AG04449 (cell line): ENCODE measurements at regions of chr1 and their contacts with region 1.

Region 1: DNA sequence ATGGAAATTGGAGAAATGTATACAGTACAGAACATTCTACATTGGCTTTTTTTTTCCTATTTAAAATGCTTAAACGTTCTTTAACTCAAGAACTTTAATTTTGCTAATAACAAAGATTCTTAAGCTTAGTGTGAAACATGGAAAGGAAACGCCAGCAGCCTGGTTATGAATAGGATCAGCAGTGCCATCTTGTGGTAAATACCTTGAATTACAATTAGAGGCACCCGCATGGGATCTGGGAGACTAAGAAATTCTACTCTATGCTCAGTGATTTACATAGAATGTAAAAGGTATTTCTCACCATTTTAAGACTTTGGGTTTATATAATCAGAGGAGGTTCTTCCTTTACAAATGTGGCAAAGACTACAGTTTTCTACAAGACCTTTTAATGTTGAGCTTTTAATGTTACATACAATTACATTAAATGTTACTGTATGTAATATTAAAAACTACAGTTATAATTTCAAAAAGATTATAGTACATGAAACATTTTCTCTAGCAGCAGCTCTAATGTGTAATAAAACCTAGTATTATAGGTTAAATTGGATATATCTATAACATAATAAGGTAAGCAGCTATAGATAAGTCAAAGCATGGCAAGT is 32.1 kb upstream of the APOBEC4 start:
- DNase-seq: no peak
- H3K4me3 ChIP-seq: no peak overlapping the region
- CTCF ChIP-seq: peak; percentile 38

Region 2: GRCh38 chr1:183370399-183371058 is 314.7 kb before region 1 on chr1:
- CTCF ChIA-PET with region 1: no interaction called
- POLR2A ChIA-PET with region 1: no interaction called
- DNase-seq: no peak
- H3K4me3 ChIP-seq: no peak overlapping the region
- CTCF ChIP-seq: no peak

Region 3: DNA sequence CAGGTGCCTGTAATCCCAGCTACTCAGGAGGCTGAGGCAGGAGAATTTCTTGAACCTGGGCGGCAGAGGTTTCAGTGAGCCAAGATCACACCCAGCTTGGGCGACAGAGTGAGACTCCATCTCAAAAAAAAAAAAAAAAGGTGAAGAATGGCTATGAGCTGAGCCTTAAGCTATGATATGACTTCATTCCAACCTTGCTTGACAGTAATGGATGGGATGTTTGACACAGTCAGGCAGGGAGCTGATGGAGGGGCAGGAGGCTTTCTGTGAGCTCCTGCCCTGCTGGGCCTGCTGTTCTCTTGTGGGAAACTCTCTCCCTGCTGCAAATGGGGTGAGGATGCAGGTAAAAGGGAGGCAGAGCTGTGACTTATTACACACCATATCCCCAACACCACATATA is 122.5 kb before region 1 on chr1:
- CTCF ChIA-PET with region 1: no interaction called
- POLR2A ChIA-PET with region 1: no interaction called
- DNase-seq: no peak
- H3K4me3 ChIP-seq: no peak overlapping the region
- CTCF ChIP-seq: no peak

Region 4: DNA sequence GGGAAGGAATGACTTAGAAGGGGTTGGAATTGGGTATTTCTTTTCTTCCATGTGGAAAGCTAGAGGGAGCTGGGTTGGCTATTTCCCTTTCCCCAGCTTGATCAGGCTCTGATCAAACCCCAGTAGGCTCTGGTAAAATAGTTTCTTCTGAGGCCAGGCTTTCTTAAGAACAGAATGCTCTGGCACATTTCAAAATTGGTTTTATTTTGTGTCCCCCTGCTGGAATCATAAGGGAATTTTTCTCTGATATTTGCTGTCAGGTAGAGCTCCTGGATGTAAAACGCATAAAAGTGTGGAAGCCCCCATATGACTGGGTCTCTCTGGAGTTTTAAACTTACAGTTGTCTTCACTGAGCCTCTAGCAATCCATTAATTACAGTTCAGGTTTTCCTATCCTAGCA is 15.0 kb before region 1 on chr1:
- CTCF ChIA-PET with region 1: interaction called, 49 read pairs
- POLR2A ChIA-PET with region 1: no interaction called
- DNase-seq: no peak
- H3K4me3 ChIP-seq: no peak overlapping the region
- CTCF ChIP-seq: no peak

Region 5: GRCh38 chr1:183699616-183700160 is 14.5 kb after region 1 on chr1:
- CTCF ChIA-PET with region 1: interaction called, 65 read pairs
- POLR2A ChIA-PET with region 1: no interaction called
- DNase-seq: no peak
- H3K4me3 ChIP-seq: no peak overlapping the region
- CTCF ChIP-seq: no peak

Region 6: DNA sequence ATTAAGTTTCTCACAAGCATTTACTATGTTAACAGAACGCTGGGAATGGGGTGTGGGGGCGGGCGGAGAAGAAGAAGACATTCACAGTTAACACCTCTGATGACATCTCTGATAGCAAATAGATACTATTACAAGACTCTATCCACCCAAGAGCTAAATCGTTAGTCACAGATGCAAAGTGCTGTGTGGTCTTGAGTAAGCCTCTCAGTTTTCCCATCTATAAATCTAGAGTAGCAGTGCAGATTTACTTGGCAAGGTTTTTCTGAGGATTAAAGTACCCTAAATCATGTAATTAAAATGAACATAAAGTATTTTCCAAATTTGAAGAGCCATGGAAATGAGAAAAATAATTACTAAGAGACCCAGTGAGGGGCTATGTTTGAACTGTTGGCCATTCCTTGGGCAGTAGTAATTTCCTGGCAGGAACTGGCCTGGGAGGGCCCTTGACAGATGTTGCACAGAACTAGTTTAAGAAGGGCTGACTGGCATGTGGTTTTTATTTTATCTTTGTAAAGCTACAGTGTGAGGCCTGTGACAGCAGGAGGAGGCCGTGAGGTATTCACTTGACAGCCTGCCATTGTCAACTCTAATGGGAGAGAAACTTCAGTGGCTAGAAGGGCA is 26.6 kb after region 1 on chr1:
- CTCF ChIA-PET with region 1: interaction called, 19 read pairs
- POLR2A ChIA-PET with region 1: no interaction called
- DNase-seq: no peak
- H3K4me3 ChIP-seq: no peak overlapping the region
- CTCF ChIP-seq: no peak

Region 7: GRCh38 chr1:184359909-184360308 is 674.7 kb after region 1 on chr1:
- CTCF ChIA-PET with region 1: no interaction called
- POLR2A ChIA-PET with region 1: no interaction called
- DNase-seq: no peak
- H3K4me3 ChIP-seq: no peak overlapping the region
- CTCF ChIP-seq: no peak